ENCODE measurements at regions of chr6 and their contacts with region 1.

Region 1: DNA sequence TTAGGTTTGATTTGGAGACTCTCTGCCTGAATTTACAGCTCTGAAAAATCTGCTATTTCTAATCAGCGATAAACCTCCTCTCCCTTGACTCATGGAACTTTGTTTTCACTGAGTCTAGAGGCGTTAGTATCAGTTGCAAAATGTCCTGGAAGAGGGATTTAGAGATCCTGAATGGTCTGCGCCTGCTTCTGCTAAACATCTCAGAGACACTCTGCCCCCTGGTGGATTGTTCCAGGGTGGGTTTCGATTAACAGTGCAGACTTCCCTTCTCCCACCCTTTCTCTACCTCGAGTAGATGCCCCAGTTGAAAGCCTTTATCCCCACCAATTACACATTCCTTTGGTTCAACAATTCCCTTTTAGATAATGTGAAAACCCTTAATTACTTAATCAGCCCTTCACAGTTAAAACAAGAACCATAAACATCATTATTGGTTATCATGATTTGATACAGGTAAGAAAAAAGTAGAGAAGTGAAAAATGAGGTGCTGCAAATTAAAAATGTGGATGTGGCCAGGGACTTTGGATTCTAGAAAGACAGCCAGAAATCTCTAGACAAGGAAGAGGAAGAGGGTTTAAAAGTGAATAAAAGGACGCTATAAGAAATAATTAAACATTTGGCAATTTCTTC is 5.5 kb downstream of the HTR1B start:
- DNase-seq: peak; percentile 56
- H3K4me3 ChIP-seq: no peak overlapping the region
- H3K27ac ChIP-seq: peak overlapping the region; percentile 68
- H3K4me1 ChIP-seq: peaks cover 8% of the 10 kb centered on the region
- H3K27me3 ChIP-seq: peaks cover 20% of the 10 kb centered on the region
- CTCF ChIP-seq: peak; percentile 82

Region 2: GRCh38 chr6:75934643-75935472 is 1523.0 kb before region 1 on chr6:
- intact Hi-C with region 1: loop called (anchors 10 kb)
- DNase-seq: no peak
- H3K4me3 ChIP-seq: peak overlapping the region; percentile 61
- H3K27ac ChIP-seq: no peak overlapping the region
- H3K4me1 ChIP-seq: peaks cover 8% of the 10 kb centered on the region
- H3K27me3 ChIP-seq: no peaks in the 10 kb centered on the region
- CTCF ChIP-seq: peak; percentile 81

Region 3: DNA sequence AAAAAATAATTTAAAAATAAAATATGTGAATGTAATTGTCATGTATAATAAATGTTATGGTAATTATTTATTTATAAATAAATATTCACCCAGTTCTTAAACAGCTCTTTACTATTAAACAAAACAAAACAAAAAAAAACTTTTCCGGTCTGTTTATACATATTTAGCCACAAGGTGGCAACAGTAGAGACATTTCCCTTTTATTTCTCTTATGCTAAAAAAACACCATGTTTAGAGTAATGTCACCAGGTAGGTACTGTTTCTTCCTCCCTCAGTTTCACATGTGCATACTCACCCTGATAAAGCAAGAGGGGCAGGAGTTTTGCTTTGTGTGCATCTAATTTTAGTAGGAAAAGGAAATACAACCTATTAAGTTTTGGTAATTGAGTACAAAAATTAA is 775.0 kb before region 1 on chr6:
- intact Hi-C with region 1: loop called (anchors 10 kb)
- DNase-seq: no peak
- H3K4me3 ChIP-seq: no peak overlapping the region
- H3K27ac ChIP-seq: no peak overlapping the region
- H3K4me1 ChIP-seq: no peaks in the 10 kb centered on the region
- H3K27me3 ChIP-seq: no peaks in the 10 kb centered on the region
- CTCF ChIP-seq: peak; percentile 56

Region 4: DNA sequence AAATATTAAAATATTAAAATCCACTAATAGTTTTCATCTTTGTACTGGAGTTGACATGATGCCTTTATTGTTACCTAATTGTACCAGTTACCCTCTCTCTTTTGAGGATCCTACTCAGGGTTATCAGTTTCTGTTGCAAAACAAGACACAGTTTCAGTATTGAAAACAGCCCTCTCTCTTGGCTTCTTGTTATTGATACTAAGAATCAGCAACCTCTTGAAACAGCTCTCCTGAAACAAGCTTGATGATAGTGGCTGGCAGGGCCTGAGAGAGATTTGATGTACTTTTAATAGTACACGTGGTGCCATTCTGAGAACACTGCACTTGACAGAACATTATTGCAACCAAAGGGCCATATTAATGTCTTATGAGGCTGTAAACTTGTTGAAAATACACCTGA is 130.1 kb after region 1 on chr6:
- intact Hi-C with region 1: no loop called
- DNase-seq: no peak
- H3K4me3 ChIP-seq: no peak overlapping the region
- H3K27ac ChIP-seq: no peak overlapping the region
- H3K4me1 ChIP-seq: no peaks in the 10 kb centered on the region
- H3K27me3 ChIP-seq: no peaks in the 10 kb centered on the region
- CTCF ChIP-seq: no peak

Region 5: DNA sequence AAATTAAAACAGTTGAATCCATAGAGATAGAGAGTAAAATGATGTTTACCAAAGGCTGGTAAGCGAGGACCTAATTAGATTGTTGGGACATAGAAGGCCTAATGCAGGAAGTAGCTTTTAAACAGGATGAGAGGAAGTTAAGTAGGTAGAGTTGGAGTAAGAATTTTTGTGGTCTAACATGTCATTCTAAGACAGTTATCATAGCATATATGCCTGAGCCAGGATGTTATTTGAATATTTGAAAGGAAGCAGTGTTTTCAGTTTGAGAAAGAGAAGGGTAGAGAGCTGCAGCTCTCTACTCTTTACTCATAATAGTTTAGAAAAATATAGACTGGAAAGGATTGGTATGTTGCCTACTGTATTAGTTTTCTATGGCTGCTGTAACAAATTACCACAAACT is 316.6 kb after region 1 on chr6:
- intact Hi-C with region 1: no loop called
- DNase-seq: no peak
- H3K4me3 ChIP-seq: no peak overlapping the region
- H3K27ac ChIP-seq: no peak overlapping the region
- H3K4me1 ChIP-seq: no peaks in the 10 kb centered on the region
- H3K27me3 ChIP-seq: no peaks in the 10 kb centered on the region
- CTCF ChIP-seq: no peak

Measured in left ventricle myocardium inferior (tissue), 1 donor.